ENCODE measurements at regions of chr11 and their contacts with region 1.

Region 1: GRCh38 chr11:112289588-112290492 is 29.2 kb upstream of the PLET1 start:
- DNase-seq: peak in 1 of 2 donors; percentile 92
- H3K4me3 ChIP-seq: peak overlapping the region; percentile 77 to 84
- H3K27ac ChIP-seq: peak overlapping the region; percentile 88
- H3K4me1 ChIP-seq: peaks cover 8 to 23% of the 10 kb centered on the region in 2 donors
- H3K27me3 ChIP-seq: no peaks in the 10 kb centered on the region
- CTCF ChIP-seq: peak; percentile 74 to 88 (median 88)

Region 2: GRCh38 chr11:111926505-111927391 is 363.1 kb before region 1 on chr11:
- intact Hi-C with region 1: loop called (anchors 10 kb)
- DNase-seq: peak; percentile 92 to 98
- H3K4me3 ChIP-seq: peak overlapping the region; percentile 40 to 57
- H3K27ac ChIP-seq: peak overlapping the region; percentile 89 to 92
- H3K4me1 ChIP-seq: peaks cover 14 to 40% of the 10 kb centered on the region in 2 donors
- H3K27me3 ChIP-seq: no peaks in the 10 kb centered on the region
- CTCF ChIP-seq: no peak

Region 3: DNA sequence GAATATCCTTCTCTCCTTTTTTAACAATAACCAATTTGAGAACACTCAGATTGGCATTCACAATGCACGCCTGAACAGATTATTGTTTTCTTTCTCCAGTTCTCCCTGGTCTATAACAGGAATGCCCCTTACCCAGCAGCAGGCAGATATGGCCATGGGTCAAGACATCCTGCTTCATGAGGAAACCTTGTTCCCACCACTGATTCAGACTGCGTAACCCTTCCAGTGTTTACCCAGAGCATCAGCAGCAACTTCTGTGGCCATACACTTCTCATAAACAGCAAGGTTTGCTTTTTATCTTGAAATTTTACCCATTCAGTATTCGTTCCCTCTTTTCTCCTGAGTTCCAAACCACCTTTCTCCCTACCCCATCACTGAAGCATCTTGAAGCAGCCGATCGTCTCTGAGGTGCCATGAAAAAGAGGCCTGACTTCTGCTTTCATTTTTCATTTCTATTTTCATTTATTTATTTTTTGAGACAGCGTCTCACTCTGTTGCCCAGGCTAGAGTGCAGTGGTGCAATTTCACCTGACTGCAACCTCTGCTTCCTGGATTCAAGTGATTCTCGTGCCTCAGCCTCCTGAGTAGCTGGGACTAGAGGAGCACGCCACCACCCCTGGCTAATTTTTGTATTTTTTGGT is 54.0 kb before region 1 on chr11:
- intact Hi-C with region 1: no loop called
- DNase-seq: no peak
- H3K4me3 ChIP-seq: no peak overlapping the region
- H3K27ac ChIP-seq: no peak overlapping the region
- H3K4me1 ChIP-seq: no peaks in the 10 kb centered on the region
- H3K27me3 ChIP-seq: no peaks in the 10 kb centered on the region
- CTCF ChIP-seq: no peak

Region 4: GRCh38 chr11:112453601-112454577 is 164.0 kb after region 1 on chr11:
- intact Hi-C with region 1: loop called (anchors 1 kb)
- DNase-seq: no peak
- H3K4me3 ChIP-seq: no peak overlapping the region
- H3K27ac ChIP-seq: no peak overlapping the region
- H3K4me1 ChIP-seq: no peaks in the 10 kb centered on the region
- H3K27me3 ChIP-seq: no peaks in the 10 kb centered on the region
- CTCF ChIP-seq: peak in 2 of 3 experiments; percentile 38 to 39

Region 5: DNA sequence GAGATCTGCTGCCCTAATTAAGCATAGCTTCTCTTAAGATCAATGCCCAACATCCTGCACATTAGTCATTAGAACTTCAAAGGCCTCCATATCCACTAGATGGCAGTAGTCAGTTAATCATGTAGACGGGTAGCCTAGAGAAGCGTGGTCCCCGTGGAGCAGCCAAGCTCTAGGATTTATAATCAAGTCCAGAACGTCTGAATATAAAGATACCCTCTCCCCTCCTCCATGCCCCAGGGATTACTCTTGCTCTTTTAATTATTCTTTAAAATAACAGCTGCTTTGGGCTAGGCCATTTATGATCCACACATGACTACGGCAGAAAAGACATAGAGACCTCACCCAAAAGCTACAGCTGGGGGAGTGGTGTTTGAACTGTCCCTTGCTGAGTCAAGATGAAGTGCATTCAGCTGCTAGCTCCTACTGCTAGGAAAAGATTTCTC is 298.4 kb after region 1 on chr11:
- intact Hi-C with region 1: loop called (anchors 2 kb)
- DNase-seq: peak in 1 of 2 donors; percentile 77
- H3K4me3 ChIP-seq: no peak overlapping the region
- H3K27ac ChIP-seq: no peak overlapping the region
- H3K4me1 ChIP-seq: no peaks in the 10 kb centered on the region
- H3K27me3 ChIP-seq: no peaks in the 10 kb centered on the region
- CTCF ChIP-seq: peak; percentile 59 to 75 (median 64)

Region 6: GRCh38 chr11:112961146-112961668 is 671.4 kb after region 1 on chr11 and contains the start of gene NCAM1:
- intact Hi-C with region 1: loop called (anchors 10 kb)
- DNase-seq: peak in 1 of 2 donors; percentile 68
- H3K4me3 ChIP-seq: peak within 1 kb of the TSS; percentile 69 to 79
- H3K27ac ChIP-seq: peak within 1 kb of the TSS in 1 of 2 donors; percentile 1
- H3K4me1 ChIP-seq: peaks cover 0 to 7% of the 10 kb centered on the region in 2 donors
- H3K27me3 ChIP-seq: no peaks in the 10 kb centered on the region
- CTCF ChIP-seq: no peak
- total RNA-seq, gene NCAM1: 3.3 TPM

Region 7: GRCh38 chr11:113162592-113162962 is 872.7 kb after region 1 on chr11:
- intact Hi-C with region 1: loop called (anchors 5 kb)
- DNase-seq: peak in 1 of 2 donors; percentile 71
- H3K4me3 ChIP-seq: no peak overlapping the region
- H3K27ac ChIP-seq: peak overlapping the region; percentile 28 to 44
- H3K4me1 ChIP-seq: peaks cover 0 to 22% of the 10 kb centered on the region in 2 donors
- H3K27me3 ChIP-seq: no peaks in the 10 kb centered on the region
- CTCF ChIP-seq: peak in 1 of 3 experiments; percentile 53

Region 8: DNA sequence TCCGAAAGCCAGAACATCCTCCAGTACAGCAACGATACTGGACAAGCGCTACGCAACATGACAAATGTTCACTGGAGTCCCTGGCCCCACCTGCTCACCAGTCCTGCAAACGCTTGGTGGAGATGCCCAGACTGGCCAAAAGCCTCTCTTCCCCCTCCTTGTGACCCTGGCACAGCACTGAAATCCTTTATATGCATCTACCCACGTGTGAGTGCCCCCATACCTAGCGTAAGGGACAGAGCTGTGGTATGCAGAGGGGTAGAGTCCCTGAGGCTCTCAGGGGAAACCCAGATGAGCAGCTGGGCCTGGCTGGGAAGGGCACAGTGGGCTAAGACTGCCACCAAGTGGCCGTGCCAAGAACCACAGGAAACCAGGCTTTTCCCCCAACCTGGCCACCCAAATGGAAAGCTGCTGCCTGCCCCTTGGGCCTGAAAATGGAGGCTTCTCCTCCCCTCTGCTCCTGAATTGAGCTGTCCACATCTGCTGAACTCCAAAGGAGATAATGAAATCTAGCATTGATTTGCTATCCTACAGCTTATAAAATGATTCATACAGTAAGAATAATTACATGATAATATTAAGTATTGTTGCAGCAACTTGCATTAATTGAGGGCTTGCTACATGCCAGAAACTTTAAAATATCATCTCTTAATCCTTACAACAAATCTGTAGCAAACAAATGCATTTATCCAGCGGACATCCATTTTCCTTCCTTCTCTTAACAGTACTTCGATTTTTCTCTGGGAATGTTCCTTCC is 999.8 kb after region 1 on chr11:
- intact Hi-C with region 1: loop called (anchors 5 kb)
- DNase-seq: peak in 1 of 2 donors; percentile 75
- H3K4me3 ChIP-seq: no peak overlapping the region
- H3K27ac ChIP-seq: no peak overlapping the region
- H3K4me1 ChIP-seq: no peaks in the 10 kb centered on the region
- H3K27me3 ChIP-seq: no peaks in the 10 kb centered on the region
- CTCF ChIP-seq: peak; percentile 75 to 94 (median 78)

Measured in ascending aorta (tissue), 2 donors.